CD4-positive, alpha-beta T cell (primary cell): ENCODE measurements at regions of chr19 and their contacts with region 1.

Region 1: DNA sequence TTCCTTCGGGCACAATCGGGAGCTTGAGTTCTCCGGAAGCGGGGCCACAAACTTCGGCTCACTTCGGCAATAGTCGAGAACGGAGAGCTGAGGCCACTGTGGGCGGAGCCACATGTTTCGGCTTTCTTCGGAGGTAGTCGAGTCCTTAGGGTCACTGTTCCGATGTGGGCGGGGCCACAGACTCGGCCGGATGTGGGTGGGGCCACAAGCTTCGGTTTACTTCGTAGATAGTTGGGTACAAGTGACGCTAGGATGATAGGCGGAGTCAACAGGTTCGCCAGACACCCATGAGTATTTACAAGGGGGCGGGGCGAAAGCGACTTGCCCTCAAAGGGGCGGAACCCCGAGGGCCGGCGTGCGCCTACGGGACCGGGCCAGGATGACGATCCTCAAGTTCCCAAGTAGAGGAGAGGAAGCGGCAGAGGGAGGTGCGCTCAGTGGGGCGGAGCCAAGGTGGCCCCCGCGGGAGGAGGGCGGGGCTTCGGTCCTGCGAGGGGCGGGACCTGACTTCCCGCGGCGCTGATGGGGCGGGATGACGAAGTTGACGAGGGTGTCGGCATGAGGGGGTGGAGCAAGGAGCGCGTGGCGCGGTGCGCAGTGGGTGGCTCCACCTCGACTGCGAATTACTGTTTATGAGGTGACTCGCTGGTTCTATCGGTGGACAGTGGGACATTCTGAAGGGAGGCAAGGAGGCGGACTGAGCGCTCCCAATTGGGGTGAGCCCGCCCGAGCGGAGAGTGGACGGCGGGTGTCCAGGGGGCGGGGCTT is 539 bp upstream of the MBOAT7 start:
- DNase-seq: peak; percentile 100
- ATAC-seq: peak; percentile 60
- H3K4me3 ChIP-seq: peak overlapping the region; percentile 74
- H3K4me3 Mint-ChIP-seq: peak overlapping the region; percentile 90
- H3K27ac ChIP-seq: peak overlapping the region; percentile 99
- H3K27ac Mint-ChIP-seq: peak overlapping the region; percentile 96
- H3K4me1 ChIP-seq: peaks cover 33% of the 10 kb centered on the region
- H3K4me1 Mint-ChIP-seq: peaks cover 33% of the 10 kb centered on the region
- H3K27me3 ChIP-seq: no peaks in the 10 kb centered on the region
- H3K27me3 Mint-ChIP-seq: no peaks in the 10 kb centered on the region
- CTCF ChIP-seq: no peak

Region 2: GRCh38 chr19:53867225-53868090 is 322.5 kb before region 1 on chr19 and contains the start of gene MYADM:
- CTCF ChIA-PET with region 1: no interaction called
- POLR2A ChIA-PET with region 1: interaction called, 17 read pairs
- intact Hi-C with region 1: loop called (anchors 1 to 10 kb)
- DNase-seq: peak; percentile 99 to 100 (median 100)
- ATAC-seq: peak; percentile 75
- H3K4me3 ChIP-seq: peak within 1 kb of the TSS; percentile 100
- H3K4me3 Mint-ChIP-seq: peak within 1 kb of the TSS; percentile 99
- H3K27ac ChIP-seq: peak within 1 kb of the TSS; percentile 97 to 100
- H3K27ac Mint-ChIP-seq: peak within 1 kb of the TSS; percentile 99
- H3K4me1 ChIP-seq: peaks cover 59% of the 10 kb centered on the region
- H3K4me1 Mint-ChIP-seq: peaks cover 46% of the 10 kb centered on the region
- H3K27me3 ChIP-seq: no peaks in the 10 kb centered on the region
- H3K27me3 Mint-ChIP-seq: no peaks in the 10 kb centered on the region
- CTCF ChIP-seq: no peak
- total RNA-seq, gene MYADM: 444 to 448 TPM

Region 3: GRCh38 chr19:54123682-54124081 is 66.2 kb before region 1 on chr19:
- CTCF ChIA-PET with region 1: no interaction called
- POLR2A ChIA-PET with region 1: no interaction called
- intact Hi-C with region 1: no loop called
- DNase-seq: no peak
- ATAC-seq: no peak
- H3K4me3 ChIP-seq: no peak overlapping the region
- H3K4me3 Mint-ChIP-seq: no peak overlapping the region
- H3K27ac ChIP-seq: no peak overlapping the region
- H3K27ac Mint-ChIP-seq: no peak overlapping the region
- H3K4me1 ChIP-seq: no peaks in the 10 kb centered on the region
- H3K4me1 Mint-ChIP-seq: no peaks in the 10 kb centered on the region
- H3K27me3 ChIP-seq: no peaks in the 10 kb centered on the region
- H3K27me3 Mint-ChIP-seq: no peaks in the 10 kb centered on the region
- CTCF ChIP-seq: no peak

Region 4: DNA sequence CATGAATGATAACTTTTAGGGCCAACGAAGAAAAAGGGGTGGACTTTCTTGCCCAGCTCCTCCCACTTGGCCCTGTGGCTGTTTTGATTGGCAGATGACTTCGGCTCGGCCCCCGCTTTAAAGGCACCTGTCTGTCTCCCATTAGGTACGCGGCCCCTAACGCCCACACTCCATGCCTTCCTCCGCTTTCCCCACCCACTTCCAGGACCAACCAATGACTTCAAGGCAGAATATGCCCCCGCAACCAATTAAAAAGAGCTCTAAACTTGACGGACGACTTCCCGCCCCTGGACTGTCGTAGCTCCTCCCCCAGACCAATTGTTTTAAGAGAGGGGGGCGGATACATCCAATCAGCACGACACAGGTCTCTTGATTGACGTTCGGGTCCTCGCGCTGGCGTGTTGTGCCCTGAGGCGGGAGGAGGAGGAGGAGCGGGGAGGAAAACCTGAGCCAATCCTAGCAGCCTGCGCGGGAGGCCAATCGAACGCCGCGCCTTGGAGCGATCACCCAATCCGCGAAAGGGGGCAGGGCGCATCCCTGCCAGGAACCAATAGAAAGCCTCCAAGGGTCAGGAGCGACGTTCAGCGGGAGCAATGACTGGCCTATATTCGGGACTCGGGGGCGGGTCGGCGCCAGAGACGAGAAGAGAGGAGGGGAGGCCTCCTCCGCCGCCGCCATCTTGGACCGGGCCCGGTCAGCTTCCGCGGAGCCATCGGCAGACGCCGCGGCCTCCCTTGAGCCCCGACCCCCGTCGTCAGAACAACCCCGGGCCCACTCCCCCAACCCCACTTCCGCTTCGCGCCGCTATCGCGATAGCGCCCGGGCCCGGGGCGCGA is 52.6 kb before region 1 on chr19 and contains the start of gene CNOT3:
- CTCF ChIA-PET with region 1: interaction called, 5 read pairs
- POLR2A ChIA-PET with region 1: interaction called, 130 read pairs
- intact Hi-C with region 1: loop called in 1 of 2 experiments (anchors 1 kb)
- DNase-seq: peak; percentile 97 to 100 (median 98)
- ATAC-seq: peak; percentile 78
- H3K4me3 ChIP-seq: peak within 1 kb of the TSS; percentile 69
- H3K4me3 Mint-ChIP-seq: peak within 1 kb of the TSS; percentile 92
- H3K27ac ChIP-seq: peak within 1 kb of the TSS; percentile 82 to 92
- H3K27ac Mint-ChIP-seq: peak within 1 kb of the TSS; percentile 79
- H3K4me1 ChIP-seq: peaks cover 48% of the 10 kb centered on the region
- H3K4me1 Mint-ChIP-seq: peaks cover 48% of the 10 kb centered on the region
- H3K27me3 ChIP-seq: no peaks in the 10 kb centered on the region
- H3K27me3 Mint-ChIP-seq: no peaks in the 10 kb centered on the region
- CTCF ChIP-seq: no peak
- total RNA-seq, gene CNOT3: 26.7 to 28.7 TPM

Region 5: GRCh38 chr19:54168174-54168917 is 21.6 kb before region 1 on chr19:
- CTCF ChIA-PET with region 1: interaction called, 20 read pairs
- POLR2A ChIA-PET with region 1: interaction called, 7 read pairs
- intact Hi-C with region 1: loop called in 1 of 2 experiments (anchors 2 kb)
- DNase-seq: peak; percentile 79 to 97 (median 90)
- ATAC-seq: peak; percentile 83
- H3K4me3 ChIP-seq: no peak overlapping the region
- H3K4me3 Mint-ChIP-seq: no peak overlapping the region
- H3K27ac ChIP-seq: no peak overlapping the region
- H3K27ac Mint-ChIP-seq: no peak overlapping the region
- H3K4me1 ChIP-seq: peaks cover 34% of the 10 kb centered on the region
- H3K4me1 Mint-ChIP-seq: peaks cover 12% of the 10 kb centered on the region
- H3K27me3 ChIP-seq: no peaks in the 10 kb centered on the region
- H3K27me3 Mint-ChIP-seq: no peaks in the 10 kb centered on the region
- CTCF ChIP-seq: peak; percentile 80

Region 6: GRCh38 chr19:54209811-54210494 is 20.0 kb after region 1 on chr19:
- CTCF ChIA-PET with region 1: interaction called, 4 read pairs
- POLR2A ChIA-PET with region 1: interaction called, 75 read pairs
- intact Hi-C with region 1: no loop called
- DNase-seq: peak in 4 of 14 experiments; percentile 28 to 69 (median 56)
- ATAC-seq: no peak
- H3K4me3 ChIP-seq: no peak overlapping the region
- H3K4me3 Mint-ChIP-seq: peak overlapping the region; percentile 18
- H3K27ac ChIP-seq: peak overlapping the region; percentile 4 to 23
- H3K27ac Mint-ChIP-seq: peak overlapping the region; percentile 62
- H3K4me1 ChIP-seq: peaks cover 65% of the 10 kb centered on the region
- H3K4me1 Mint-ChIP-seq: peaks cover 56% of the 10 kb centered on the region
- H3K27me3 ChIP-seq: no peaks in the 10 kb centered on the region
- H3K27me3 Mint-ChIP-seq: no peaks in the 10 kb centered on the region
- CTCF ChIP-seq: no peak

Region 7: GRCh38 chr19:54257116-54257480 is 67.2 kb after region 1 on chr19 and contains the start of gene LILRB5:
- CTCF ChIA-PET with region 1: no interaction called
- POLR2A ChIA-PET with region 1: no interaction called
- intact Hi-C with region 1: no loop called
- DNase-seq: no peak
- ATAC-seq: no peak
- H3K4me3 ChIP-seq: no peak within 1 kb of the TSS
- H3K4me3 Mint-ChIP-seq: no peak within 1 kb of the TSS
- H3K27ac ChIP-seq: no peak within 1 kb of the TSS
- H3K27ac Mint-ChIP-seq: no peak within 1 kb of the TSS
- H3K4me1 ChIP-seq: no peaks in the 10 kb centered on the region
- H3K4me1 Mint-ChIP-seq: no peaks in the 10 kb centered on the region
- H3K27me3 ChIP-seq: no peaks in the 10 kb centered on the region
- H3K27me3 Mint-ChIP-seq: no peaks in the 10 kb centered on the region
- CTCF ChIP-seq: no peak
- total RNA-seq, gene LILRB5: not detected

Region 8: GRCh38 chr19:54448774-54449700 is 259.1 kb after region 1 on chr19 and contains the start of gene LENG8:
- CTCF ChIA-PET with region 1: no interaction called
- POLR2A ChIA-PET with region 1: interaction called, 21 read pairs
- intact Hi-C with region 1: loop called in 1 of 2 experiments (anchors 1 kb)
- DNase-seq: peak; percentile 93 to 100 (median 97)
- ATAC-seq: peak; percentile 90
- H3K4me3 ChIP-seq: peak within 1 kb of the TSS; percentile 98
- H3K4me3 Mint-ChIP-seq: peak within 1 kb of the TSS; percentile 92
- H3K27ac ChIP-seq: peak within 1 kb of the TSS; percentile 91 to 98
- H3K27ac Mint-ChIP-seq: peak within 1 kb of the TSS; percentile 98
- H3K4me1 ChIP-seq: peaks cover 48% of the 10 kb centered on the region
- H3K4me1 Mint-ChIP-seq: peaks cover 56% of the 10 kb centered on the region
- H3K27me3 ChIP-seq: no peaks in the 10 kb centered on the region
- H3K27me3 Mint-ChIP-seq: no peaks in the 10 kb centered on the region
- CTCF ChIP-seq: no peak
- total RNA-seq, gene LENG8: 610 to 639 TPM

Region 9: GRCh38 chr19:54594737-54595136 is 404.8 kb after region 1 on chr19:
- CTCF ChIA-PET with region 1: no interaction called
- POLR2A ChIA-PET with region 1: no interaction called
- intact Hi-C with region 1: no loop called
- DNase-seq: no peak
- ATAC-seq: no peak
- H3K4me3 ChIP-seq: no peak overlapping the region
- H3K4me3 Mint-ChIP-seq: no peak overlapping the region
- H3K27ac ChIP-seq: no peak overlapping the region
- H3K27ac Mint-ChIP-seq: no peak overlapping the region
- H3K4me1 ChIP-seq: no peaks in the 10 kb centered on the region
- H3K4me1 Mint-ChIP-seq: no peaks in the 10 kb centered on the region
- H3K27me3 ChIP-seq: peaks cover 8 to 16% of the 10 kb centered on the region in 2 experiments
- H3K27me3 Mint-ChIP-seq: peaks cover 36% of the 10 kb centered on the region
- CTCF ChIP-seq: no peak